Vagina (tissue), 2 donors: ENCODE measurements at regions of chr7 and their contacts with region 1.

Region 1: GRCh38 chr7:142248166-142249160 is 9.4 kb downstream of the PRSS58 start:
- DNase-seq: no peak
- H3K4me3 ChIP-seq: no peak overlapping the region
- H3K27ac ChIP-seq: no peak overlapping the region
- H3K4me1 ChIP-seq: no peaks in the 10 kb centered on the region
- H3K27me3 ChIP-seq: no peaks in the 10 kb centered on the region
- CTCF ChIP-seq: no peak
- POLR2A ChIP-seq: no peak

Region 2: DNA sequence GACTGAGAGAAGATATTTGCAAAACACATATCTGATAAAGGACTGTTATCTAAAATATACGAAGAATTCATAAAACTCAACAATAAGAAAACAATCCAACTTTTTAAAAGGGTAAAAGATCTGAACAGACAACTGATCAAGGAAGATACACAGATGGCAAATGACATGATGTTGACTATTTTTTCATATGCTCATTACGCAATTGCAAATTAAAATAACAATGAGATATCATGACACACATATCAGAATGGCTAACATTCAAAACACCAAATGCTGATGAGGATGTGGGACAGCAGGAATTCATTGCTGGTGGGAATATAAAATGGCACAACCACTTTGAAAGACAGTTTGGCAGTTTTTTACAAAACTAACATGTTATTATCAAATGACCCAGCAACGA is 555.4 kb before region 1 on chr7:
- intact Hi-C with region 1: loop called (anchors 5 kb)
- DNase-seq: no peak
- H3K4me3 ChIP-seq: no peak overlapping the region
- H3K27ac ChIP-seq: no peak overlapping the region
- H3K4me1 ChIP-seq: peaks cover 6% of the 10 kb centered on the region
- H3K27me3 ChIP-seq: no peaks in the 10 kb centered on the region
- CTCF ChIP-seq: no peak
- POLR2A ChIP-seq: no peak